GM18951 (cell line): ENCODE measurements at regions of chr21 and their contacts with region 1.

Region 1: DNA sequence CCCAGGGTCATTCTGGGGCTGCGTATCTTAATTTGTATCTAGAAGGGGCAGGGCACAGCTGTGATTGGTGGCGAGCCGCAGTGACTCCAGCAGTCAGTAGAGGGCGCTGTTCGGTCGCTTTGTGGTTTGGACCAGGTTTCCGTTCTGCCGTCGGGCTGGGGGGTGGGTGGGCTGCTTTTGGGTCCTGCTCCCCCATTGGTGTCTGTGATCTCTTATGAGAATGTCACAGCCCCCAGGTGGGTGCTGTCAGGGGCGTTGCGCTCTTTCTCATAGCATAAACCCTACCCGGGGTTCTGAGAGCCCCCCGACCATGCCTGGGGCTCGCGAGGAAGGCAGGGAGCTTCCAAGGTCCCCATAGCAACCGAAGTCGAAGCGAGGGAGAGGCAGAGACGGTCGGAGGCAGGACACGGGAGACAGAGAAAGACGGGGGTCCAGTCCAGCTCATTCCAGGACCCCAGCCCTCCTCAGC is 5.4 kb downstream of the TFF3 start:
- POLR2A ChIP-seq: no peak

Region 2: GRCh38 chr21:42456457-42456856 is 146.7 kb after region 1 on chr21:
- in situ Hi-C with region 1: loop called (anchors 10 kb)
- POLR2A ChIP-seq: no peak

Region 3: DNA sequence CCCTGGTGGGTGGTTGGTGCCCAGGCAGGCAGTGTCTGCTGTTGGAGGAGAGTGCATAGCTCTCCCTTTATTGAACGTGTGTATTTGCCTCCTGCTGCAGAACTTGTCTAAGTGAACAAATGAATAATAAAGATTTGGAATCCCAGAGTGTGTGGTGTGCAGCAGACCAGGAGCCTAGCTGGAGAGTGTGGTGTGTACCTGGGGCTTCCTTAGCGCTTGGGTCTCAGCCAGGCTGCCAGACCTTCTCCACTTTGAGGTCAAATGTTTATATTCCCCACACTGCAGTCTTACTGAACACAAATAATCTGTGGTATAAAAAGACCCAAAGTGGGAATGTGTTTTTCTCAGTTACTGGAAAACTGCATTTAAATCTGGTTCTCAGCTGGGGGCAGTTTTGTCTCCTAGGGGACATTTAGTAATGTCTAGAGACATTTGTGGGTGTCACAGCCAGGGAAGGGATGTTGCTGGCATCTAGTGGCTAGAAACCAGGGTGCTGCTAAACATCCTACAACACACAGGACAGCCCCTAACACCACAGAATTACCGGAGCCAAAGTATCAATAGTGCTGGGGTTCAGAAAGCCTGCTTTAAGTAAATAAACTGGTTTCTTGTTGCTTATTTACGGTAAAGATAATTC is 227.4 kb after region 1 on chr21:
- in situ Hi-C with region 1: loop called (anchors 10 kb)
- POLR2A ChIP-seq: no peak